Dendritic cell treated with granulocyte-macrophage colony-stimulating factor and Interleukin-4, amounts not matched to agents 40 ng/mL and 50 ng/mL, for 4 days (primary cell): ENCODE measurements at regions of chr4 and their contacts with region 1.

Region 1: GRCh38 chr4:81881855-81882621 is 410.3 kb upstream of the RASGEF1B start:
- H3K4me3 Mint-ChIP-seq: no peak overlapping the region
- H3K27ac Mint-ChIP-seq: no peak overlapping the region
- H3K4me1 Mint-ChIP-seq: peaks cover 11% of the 10 kb centered on the region
- H3K27me3 Mint-ChIP-seq: no peaks in the 10 kb centered on the region

Region 2: DNA sequence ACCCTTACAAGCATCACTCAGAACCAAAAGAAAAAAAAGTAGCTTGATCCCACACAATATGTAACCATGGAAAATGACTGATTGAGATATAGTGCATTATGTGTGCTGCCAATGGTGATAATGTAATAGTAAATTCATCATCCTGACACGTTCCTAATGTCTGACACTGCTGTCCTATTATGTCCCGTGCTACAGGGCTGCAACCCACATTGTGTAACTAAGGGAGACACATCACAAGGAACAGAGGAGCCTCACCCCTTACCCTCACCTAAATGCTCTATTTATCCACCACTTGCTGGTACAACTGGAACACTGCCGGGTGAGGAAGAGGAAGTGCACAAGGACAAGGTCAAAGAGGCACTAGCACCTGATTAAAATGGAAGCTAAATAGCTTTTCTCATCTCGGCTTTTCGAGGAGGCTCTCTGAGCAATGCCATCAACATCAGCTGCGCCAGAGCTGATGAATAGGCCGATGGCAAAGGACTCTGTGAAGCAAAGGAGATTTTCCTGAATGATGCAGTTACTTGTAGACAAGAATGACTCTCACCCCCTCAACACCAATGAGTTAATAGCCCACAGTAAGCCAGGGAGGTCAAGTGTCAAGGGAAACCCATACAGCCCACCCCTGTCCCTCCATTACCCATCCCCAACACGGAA is 310.1 kb after region 1 on chr4:
- intact Hi-C with region 1: loop called (anchors 10 kb)
- H3K4me3 Mint-ChIP-seq: no peak overlapping the region
- H3K27ac Mint-ChIP-seq: no peak overlapping the region
- H3K4me1 Mint-ChIP-seq: no peaks in the 10 kb centered on the region
- H3K27me3 Mint-ChIP-seq: no peaks in the 10 kb centered on the region

Region 3: GRCh38 chr4:82419451-82419850 is 537.4 kb after region 1 on chr4:
- intact Hi-C with region 1: no loop called
- H3K4me3 Mint-ChIP-seq: no peak overlapping the region
- H3K27ac Mint-ChIP-seq: no peak overlapping the region
- H3K4me1 Mint-ChIP-seq: no peaks in the 10 kb centered on the region
- H3K27me3 Mint-ChIP-seq: peaks cover 11% of the 10 kb centered on the region